OCI-LY7 (cell line): ENCODE measurements at regions of chr9 and their contacts with region 1.

Region 1: GRCh38 chr9:130128733-130129431 is 43.3 kb upstream of the NCS1 start:
- DNase-seq: no peak
- H3K4me3 ChIP-seq: no peak overlapping the region
- H3K27ac ChIP-seq: no peak overlapping the region
- H3K4me1 ChIP-seq: peaks cover 4% of the 10 kb centered on the region
- CTCF ChIP-seq: no peak

Region 2: GRCh38 chr9:129595311-129595741 is 533.6 kb before region 1 on chr9:
- CTCF ChIA-PET with region 1: no interaction called
- POLR2A ChIA-PET with region 1: interaction called, 13 read pairs
- intact Hi-C with region 1: no loop called
- DNase-seq: no peak
- H3K4me3 ChIP-seq: no peak overlapping the region
- H3K27ac ChIP-seq: no peak overlapping the region
- H3K4me1 ChIP-seq: no peaks in the 10 kb centered on the region
- CTCF ChIP-seq: no peak

Region 3: DNA sequence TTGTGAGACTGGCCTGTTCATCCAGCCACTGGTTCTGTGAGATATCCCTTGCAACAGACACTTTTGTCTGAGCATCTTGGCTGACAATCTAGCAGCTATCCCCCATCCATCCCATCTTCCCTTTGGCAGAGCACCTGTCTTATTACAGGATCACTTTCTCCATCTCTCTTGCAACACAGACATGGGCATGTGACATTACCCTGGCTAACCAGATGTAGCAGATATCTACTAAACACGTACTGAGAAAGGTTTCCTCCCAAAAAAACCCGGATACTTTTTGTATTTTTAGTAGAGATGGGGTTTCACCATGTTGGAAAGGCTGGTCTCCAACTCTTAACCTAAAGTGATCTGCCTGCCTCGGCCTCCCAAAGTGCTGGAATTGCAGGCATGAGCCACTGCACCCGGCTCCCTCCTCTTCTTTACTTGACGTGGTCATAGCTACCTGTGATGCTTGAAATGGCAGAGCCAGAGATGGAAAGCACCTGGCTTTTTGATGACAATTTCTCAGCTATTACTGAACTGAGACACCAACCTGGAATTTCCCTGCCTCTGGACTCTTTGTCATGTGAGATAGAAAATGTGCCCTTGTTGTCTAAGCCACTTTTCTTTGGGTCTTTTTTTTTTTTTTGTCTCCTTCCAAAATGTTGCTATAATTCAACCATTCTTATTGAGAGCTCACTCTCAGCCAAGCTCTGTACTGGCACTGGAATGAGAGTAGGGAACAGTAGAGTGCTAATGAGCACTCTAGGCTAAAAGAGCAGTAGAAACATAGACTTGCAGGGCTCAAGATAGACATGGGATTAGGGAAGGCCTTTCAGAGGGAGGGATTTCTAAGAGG is 118.5 kb before region 1 on chr9:
- CTCF ChIA-PET with region 1: no interaction called
- POLR2A ChIA-PET with region 1: no interaction called
- intact Hi-C with region 1: no loop called
- DNase-seq: no peak
- H3K4me3 ChIP-seq: no peak overlapping the region
- H3K27ac ChIP-seq: peak overlapping the region; percentile 54
- H3K4me1 ChIP-seq: peaks cover 56% of the 10 kb centered on the region
- CTCF ChIP-seq: no peak

Region 4: DNA sequence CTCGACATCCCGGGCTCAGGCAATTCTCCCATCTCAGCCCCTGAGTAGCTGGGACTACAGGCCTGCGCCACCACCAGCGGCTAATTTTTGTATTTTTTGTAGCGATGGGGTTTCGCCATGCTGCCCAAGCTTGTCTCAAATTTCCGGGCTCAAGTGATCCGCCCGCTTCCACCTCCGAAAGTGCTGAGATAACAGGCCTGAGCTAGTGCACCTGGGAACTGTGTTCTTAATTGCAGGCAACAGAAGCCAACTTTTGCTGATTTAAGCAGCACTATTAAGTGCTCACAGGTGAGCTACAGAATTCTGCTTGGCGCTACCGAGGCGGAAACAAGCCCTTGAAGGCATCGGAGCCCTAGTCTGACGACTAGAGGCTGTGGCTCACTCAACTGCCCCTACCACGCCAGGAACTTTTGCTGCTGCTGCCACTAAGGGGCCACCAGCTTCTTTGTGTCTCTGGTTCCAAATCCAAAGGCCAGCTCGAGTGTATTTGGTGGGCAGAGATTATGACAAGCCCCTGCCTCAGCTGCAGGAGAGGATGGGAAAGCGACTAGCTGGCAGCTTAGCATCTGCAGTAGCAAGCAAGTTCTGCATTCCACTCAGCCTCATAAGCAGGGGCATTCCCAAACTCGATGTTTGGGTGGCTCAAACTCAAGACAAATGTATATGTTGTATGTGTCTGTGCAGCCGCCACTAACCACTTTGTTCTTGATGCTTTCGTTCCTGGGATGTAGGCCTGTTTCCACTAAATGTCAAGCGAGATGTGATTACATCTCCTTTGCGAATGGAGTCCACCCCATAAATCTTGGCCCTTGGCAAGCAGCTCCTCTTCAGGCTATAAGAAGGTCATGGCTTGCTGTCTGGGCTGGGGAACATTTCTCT is 126.1 kb after region 1 on chr9:
- CTCF ChIA-PET with region 1: no interaction called
- POLR2A ChIA-PET with region 1: no interaction called
- intact Hi-C with region 1: no loop called
- DNase-seq: no peak
- H3K4me3 ChIP-seq: no peak overlapping the region
- H3K27ac ChIP-seq: no peak overlapping the region
- H3K4me1 ChIP-seq: no peaks in the 10 kb centered on the region
- CTCF ChIP-seq: no peak

Region 5: DNA sequence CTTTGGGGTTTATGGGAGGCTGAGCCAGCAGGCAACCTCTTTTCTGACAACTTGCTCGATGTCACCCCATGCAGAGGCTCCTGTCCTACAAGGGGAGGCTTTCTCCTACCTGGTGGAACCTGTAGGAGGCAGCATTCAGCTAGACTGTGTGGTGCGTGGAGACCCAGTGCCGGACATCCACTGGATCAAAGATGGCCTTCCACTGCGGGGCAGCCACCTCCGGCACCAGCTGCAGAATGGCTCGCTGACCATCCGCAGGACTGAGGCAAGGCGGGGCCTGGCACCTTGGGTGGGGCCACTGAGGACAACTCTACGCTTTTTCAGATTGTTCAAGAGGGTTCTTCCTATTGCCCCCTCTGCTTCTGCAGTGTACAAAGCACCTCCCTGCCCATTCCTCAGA is 279.8 kb after region 1 on chr9:
- CTCF ChIA-PET with region 1: no interaction called
- POLR2A ChIA-PET with region 1: no interaction called
- intact Hi-C with region 1: no loop called
- DNase-seq: no peak
- H3K4me3 ChIP-seq: no peak overlapping the region
- H3K27ac ChIP-seq: no peak overlapping the region
- H3K4me1 ChIP-seq: no peaks in the 10 kb centered on the region
- CTCF ChIP-seq: no peak